OCI-LY7 (cell line): ENCODE measurements at regions of chr1 and their contacts with region 1.

Region 1: DNA sequence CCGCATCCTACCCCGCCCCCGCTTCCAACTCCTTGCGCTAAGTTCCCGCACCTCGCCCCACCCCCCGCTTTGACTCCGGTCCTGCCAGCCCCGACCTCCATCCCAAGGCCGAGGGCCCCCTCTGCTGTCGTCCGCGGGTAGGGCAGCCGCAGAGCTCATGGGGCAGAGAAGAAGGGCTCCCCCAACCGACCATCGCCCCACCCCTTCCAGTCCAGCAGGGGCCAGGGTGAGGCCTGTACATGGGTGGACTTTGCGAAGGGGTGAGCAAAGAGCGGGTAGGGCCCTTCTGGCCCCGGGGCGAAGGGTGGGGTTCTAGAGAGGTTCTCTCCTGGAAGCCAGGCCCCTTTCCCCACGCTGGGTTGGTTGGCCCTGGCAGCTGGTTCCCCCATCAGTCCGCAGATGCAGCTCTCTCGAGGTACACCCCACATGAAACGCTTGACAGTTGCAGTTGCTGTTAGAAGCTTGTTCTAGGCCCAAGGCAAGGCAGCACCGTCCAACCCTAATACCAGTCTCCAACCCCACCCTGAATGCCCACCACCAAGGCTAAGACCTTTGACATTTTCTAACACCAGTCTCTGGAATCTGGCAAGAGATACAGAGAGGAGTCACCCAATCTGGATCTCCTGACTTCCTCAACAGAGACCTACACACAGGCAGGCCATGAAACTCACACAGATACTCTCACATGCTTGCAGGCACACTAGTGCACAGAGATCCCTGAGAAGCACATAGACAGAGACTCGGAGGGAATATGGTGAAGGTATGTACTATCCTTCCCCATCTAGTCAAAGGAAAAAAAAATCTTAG is 25.3 kb upstream of the ADGRB2 start:
- DNase-seq: peak; percentile 91
- H3K4me3 ChIP-seq: peak overlapping the region; percentile 77
- H3K27ac ChIP-seq: peak overlapping the region; percentile 82
- H3K4me1 ChIP-seq: peaks cover 44% of the 10 kb centered on the region
- CTCF ChIP-seq: peak; percentile 90

Region 2: GRCh38 chr1:31422505-31423319 is 366.8 kb before region 1 on chr1:
- CTCF ChIA-PET with region 1: no interaction called
- POLR2A ChIA-PET with region 1: no interaction called
- intact Hi-C with region 1: loop called (anchors 5 kb)
- DNase-seq: peak; percentile 79
- H3K4me3 ChIP-seq: peak overlapping the region; percentile 57
- H3K27ac ChIP-seq: peak overlapping the region; percentile 75
- H3K4me1 ChIP-seq: peaks cover 33% of the 10 kb centered on the region
- CTCF ChIP-seq: peak; percentile 96

Region 3: DNA sequence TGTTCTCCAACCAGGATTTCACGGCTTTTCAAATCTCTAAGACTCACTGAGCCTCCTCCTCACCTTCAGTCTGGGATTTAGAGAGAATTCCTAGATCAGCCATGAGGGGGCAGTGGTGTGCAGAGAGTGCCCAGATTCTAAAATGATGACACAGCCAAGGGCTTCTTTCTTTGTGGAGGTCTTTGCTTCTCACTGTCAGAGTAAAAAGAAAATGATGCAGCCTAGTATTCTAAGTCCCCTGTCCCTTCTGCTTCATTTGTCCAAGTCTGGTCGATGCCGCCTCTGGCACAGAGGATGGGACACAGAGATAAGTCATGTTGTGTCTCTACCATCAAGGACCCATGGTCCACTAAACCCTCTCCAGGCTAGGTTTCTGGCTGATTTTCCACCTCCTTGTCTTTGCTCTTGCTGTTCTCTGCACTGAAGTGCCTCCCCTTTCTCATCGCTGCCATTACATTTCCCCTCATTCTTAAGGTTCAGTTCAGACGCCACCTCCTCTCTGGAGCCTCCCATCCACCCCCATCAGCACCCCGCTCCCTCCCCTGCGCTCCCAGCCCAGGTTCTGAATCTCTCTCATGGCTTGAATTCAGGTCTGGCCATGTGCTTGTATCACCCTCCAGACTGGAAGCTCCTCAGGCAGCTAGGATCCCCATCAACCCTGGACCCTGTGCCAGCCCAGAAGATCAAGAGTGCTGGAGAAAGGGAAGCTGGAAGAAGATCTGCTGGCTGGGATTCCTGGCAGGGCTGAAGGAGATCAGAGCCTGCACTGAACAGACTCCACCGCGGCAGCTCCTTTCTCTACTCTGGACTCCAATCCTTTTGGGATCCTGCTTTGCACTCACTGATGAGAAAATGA is 225.1 kb before region 1 on chr1:
- CTCF ChIA-PET with region 1: no interaction called
- POLR2A ChIA-PET with region 1: no interaction called
- intact Hi-C with region 1: loop called (anchors 1 kb)
- DNase-seq: peak; percentile 51
- H3K4me3 ChIP-seq: no peak overlapping the region
- H3K27ac ChIP-seq: no peak overlapping the region
- H3K4me1 ChIP-seq: no peaks in the 10 kb centered on the region
- CTCF ChIP-seq: peak; percentile 93

Region 4: DNA sequence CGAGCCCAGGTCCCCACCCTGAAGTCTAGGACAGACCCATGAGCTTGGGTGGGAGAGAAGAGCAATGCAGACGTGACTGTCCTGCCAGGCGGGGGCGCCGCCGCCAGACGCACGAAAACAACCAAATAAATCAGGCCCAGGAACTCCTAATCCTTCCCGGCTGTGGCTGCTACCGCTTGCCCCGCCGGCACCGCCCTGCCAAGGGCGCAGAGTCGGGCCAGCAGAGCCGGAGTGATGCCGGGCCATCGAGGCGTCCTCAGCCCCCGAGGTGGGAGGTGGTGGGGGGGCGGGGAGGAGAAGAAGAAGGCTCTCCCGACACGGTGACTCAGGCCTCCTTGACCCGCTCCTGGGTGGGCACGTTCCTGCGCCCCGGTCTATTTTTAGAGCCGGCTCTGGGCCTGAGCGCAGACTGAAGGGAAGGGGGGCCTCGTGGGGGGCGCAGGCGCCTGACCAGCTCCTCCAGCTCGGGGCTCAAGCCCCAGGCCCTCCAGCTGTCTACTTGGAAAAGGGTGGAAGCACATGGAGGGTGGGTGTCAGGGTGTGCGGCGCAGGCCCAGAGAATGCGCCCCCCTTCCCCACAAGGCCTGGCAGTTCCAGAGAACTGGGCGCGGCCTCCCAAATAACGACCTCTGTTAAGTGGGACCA is 74.9 kb before region 1 on chr1:
- CTCF ChIA-PET with region 1: no interaction called
- POLR2A ChIA-PET with region 1: no interaction called
- intact Hi-C with region 1: loop called (anchors 1 kb)
- DNase-seq: peak; percentile 63
- H3K4me3 ChIP-seq: no peak overlapping the region
- H3K27ac ChIP-seq: no peak overlapping the region
- H3K4me1 ChIP-seq: no peaks in the 10 kb centered on the region
- CTCF ChIP-seq: peak; percentile 82

Region 5: DNA sequence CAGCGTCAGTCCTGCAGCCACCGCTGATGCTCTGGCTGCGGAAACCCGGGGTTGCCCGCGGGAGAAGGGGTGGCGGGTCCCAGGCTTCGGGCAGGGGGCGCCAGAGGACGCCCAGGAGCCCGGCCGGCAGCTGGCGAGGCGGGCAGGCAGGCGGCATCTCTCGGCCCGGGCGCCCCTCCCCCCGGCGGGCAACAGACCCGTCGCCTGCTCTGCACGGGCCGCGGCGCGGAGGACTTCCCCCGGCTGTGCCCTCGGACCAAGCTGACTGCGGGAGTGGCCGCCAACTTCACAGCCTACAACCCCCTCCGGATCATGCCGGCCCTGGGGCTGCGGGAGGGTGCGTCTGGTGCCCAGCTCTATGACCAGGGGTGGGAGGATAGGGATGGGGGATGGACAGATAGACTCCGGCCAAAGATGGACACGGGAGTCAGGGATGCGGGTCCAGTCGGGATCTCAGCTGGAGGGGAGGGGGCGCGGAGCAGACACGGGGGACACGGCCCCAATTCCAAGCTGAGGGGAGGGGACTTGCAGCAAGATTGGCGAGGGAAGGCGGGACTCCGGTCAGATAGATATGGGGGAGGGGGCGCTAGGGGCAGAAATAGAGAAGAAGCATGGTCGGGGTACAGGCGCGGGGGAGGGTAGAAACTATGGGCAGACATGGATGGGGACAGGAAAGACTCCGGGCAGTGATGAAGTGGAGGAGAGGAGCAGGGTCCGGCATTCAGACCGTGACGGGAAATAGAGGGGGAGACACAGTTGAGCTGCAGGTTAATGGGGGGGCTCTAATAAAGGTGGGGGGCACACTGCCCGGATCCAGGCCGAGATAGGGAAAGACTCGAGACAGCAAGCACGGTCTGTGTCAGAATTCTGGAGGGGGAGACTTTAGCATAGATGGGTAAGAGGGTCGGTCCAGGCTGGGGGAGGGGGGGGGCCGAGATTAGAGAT is 26.5 kb before region 1 on chr1:
- CTCF ChIA-PET with region 1: interaction called, 13 read pairs
- POLR2A ChIA-PET with region 1: interaction called, 3 read pairs
- intact Hi-C with region 1: loop called (anchors 1 kb)
- DNase-seq: peak; percentile 80
- H3K4me3 ChIP-seq: peak overlapping the region; percentile 69
- H3K27ac ChIP-seq: no peak overlapping the region
- H3K4me1 ChIP-seq: peaks cover 55% of the 10 kb centered on the region
- CTCF ChIP-seq: peak; percentile 78